Posterior vena cava (tissue), 2 donors: ENCODE measurements at regions of chr17 and their contacts with region 1.

Region 1: GRCh38 chr17:37359682-37360188 is 16.1 kb upstream of the C17orf78 start:
- DNase-seq: no peak

Region 2: DNA sequence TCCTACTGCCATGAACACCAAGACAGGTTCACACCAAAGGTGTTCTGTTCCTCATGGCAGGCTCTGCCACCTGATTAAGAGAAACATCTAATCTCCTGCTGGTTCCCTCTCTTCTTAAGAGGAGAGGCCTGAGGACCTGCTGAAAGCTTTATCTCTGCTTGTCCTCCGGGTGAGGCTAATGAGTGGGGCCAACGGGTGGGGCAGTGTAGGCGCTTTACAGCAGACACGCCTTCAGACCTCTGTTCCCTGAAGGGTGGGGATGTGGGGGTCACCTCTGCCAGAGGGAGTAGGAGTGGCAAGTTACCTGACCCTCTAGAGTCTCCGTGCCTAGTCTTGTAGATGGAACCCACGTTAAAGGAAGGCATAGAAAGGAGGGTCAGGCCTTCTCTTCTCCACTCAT is 762.5 kb before region 1 on chr17:
- intact Hi-C with region 1: loop called in 1 of 2 experiments (anchors 5 kb)
- DNase-seq: peak; percentile 50

Region 3: GRCh38 chr17:37220607-37220953 is 139.2 kb before region 1 on chr17:
- intact Hi-C with region 1: no loop called
- DNase-seq: no peak

Region 4: DNA sequence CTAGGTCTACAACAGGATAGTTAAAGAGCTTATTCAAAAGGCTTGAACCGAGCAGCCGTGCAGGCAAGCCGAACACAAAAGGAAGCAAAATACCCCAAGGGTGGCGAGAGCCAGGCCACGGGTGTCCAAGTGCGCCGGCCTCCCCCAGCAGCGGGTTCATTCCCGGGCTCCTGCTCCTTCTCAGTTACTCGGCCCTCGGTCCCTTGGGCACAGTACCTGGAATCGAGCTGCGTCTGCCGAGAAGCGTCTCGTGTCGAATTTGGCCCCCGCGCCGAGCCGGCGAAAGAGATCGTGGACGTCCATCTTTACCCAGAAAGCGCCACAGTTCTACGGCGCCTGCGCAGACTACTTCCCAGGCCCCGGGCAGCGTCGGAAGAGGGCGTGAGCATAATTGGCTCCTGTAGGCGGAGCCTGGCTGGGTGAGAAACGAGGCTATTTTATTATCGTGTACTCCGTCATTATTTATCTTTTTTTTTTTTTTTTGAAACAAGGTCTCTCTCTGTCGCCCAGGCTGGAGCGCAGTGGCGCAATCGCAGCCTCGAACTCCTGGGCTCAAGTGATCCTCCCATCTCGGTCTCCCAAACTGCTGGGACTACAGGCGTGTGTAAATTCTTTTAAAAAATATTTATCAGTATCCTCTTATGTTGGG is 283.5 kb after region 1 on chr17 and contains the start of gene DDX52:
- intact Hi-C with region 1: no loop called
- DNase-seq: peak; percentile 98
- total RNA-seq, gene DDX52: 16.8 to 20.7 TPM